ENCODE measurements at regions of chr19 and their contacts with region 1.

Region 1: DNA sequence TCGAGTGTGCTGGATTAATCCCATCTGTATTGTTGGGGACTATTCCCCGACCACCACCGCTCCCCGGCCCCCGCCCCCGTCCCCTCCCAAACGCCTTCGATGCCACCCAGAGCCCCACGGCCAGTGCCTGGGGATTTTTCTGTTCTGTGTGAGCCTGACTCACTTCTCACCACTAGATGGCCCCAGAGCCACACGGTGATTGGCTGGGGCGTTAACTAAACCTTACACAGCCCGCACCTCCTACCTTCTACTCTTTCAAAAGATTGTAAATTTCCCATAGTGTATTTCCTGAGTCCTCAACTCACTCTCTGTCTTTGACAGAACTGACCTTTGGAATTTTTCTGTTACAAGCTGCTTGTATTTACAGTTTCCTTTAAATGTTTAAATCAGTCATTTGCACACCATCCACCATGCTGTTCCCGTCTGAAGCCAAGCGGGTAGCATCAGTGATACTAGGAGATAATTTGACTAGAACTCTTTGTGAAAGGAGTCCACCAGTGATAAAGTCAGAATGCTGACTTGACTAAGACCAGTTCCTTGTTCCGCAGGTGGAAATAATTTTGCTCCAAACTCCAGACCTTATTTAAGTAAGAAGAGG is 61.4 kb downstream of the RFX2 start:
- DNase-seq: peak; percentile 91

Region 2: GRCh38 chr19:5809053-5809452 is 239.9 kb before region 1 on chr19:
- intact Hi-C with region 1: no loop called
- DNase-seq: no peak

Region 3: DNA sequence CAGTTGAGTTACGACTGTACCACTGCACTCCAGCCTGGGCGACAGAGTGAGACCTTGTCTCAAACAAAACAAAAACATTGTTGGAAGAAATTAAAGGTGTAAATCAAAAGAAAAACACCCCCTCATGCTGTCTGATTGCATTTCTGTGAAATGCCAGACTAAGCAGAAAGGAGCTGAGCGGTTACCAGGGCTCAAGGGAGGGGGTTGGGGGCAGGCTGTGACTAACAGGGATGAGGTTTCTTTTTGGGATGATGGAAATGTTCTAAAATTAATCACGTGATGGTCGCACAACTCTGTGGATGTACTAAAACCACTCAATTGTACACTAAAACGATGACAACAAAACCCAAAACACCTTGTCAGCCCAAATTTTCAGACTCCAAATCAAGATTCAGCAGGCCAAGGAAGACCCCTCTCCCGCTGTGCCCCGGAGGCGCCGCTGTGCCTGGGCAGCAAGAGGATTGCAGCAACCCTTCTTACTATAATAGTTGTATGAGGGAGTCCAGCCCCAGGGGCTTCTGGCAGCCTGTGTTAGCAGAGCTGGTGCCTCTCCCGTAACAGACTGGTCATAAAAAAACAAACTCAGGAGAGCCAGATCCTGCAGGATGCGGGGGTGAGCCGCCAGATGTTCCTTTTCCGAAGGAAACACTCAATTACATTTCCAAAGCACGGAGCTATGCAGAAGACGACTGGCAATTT is 114.0 kb before region 1 on chr19:
- intact Hi-C with region 1: no loop called
- DNase-seq: no peak

Region 4: DNA sequence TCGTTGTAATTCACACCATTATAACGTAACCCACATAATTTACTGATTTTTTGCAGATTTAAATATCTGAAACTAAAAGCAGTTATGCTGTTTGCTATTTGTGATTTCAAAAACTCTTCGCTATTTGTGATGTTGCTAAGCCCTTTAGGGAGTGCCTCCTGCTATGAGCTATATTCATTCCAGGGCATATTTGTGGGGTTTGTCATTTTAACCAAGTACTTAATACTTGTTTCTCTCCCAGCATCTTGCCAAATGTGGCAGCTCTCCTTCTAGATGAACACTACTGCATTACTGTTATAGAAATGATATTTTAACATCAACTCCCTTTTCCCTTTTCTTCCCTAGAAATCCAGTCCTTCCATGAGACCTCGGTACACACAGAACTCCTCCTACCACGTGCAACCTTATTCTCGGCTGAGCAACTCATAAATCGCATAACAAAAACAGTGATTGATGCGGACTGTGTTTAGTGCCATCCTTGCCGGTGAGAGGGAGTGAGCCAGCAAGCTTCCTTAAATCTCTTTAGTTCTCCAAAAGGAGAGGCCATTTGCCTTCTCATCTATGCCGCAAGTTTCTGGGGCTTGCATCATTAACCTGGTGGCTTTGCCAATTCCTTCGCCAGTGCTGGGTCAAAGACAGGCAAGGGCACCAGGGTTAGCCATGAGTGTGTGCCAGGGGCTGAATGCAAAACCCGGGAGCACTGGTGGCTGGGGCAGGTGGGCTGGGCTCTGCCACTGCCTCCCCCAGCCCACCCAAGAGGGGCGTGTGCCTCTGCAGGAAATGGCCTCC is 28.0 kb after region 1 on chr19:
- intact Hi-C with region 1: no loop called
- DNase-seq: no peak

Region 5: GRCh38 chr19:6125571-6125989 is 76.7 kb after region 1 on chr19:
- intact Hi-C with region 1: loop called (anchors 1 kb)
- DNase-seq: peak; percentile 82

Region 6: GRCh38 chr19:6279931-6280591 is 231.2 kb after region 1 on chr19 and contains the start of gene MLLT1:
- intact Hi-C with region 1: loop called (anchors 5 kb)
- DNase-seq: peak; percentile 99
- total RNA-seq, gene MLLT1: 30.6 TPM

Measured in cardiac septum (tissue), 1 donor.